Cardiac septum (tissue), 1 donor: ENCODE measurements at regions of chr12 and their contacts with region 1.

Region 1: DNA sequence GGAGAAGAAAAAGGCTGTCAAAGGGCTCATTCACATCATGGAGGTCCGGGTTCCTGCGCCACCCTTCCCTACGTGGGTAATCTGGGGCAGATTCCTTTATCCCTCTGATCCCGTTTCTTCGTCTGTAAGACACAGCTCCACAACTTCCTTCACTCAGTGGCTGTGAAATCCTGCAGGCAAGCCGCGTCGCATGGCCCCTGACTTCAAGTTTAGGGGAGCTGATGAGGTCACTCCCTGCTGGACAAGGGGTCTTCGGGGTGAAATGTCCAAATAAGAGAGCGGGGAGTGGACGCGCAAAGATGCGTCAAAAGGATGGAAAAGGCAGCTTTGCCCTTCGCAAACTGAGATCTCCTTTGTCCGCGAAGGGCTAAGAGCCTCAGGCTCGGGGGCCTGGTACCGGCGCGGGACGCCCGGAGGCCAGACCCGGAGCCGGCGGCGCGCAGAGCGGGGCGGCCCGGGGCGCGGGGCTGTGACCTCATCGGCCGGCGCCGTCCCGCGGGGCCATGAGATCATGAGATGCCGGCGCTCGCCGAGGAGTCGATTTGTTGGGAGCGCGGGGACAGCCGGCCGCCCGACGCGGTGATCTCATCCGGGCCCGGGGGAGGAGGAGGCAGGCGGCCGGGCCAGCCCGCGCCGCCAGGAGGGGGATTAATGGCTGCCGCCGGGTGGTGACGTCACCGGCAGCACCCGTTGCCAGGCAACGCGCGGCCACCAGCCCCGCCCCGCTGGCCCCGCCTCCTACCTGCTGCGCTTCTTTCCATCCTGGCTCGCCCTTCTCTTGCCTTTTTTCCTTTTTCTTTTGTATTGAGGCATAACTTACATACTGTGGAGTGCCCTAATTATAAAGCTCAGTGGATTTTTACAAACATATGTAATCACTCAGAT is 62.1 kb downstream of the HRK start:
- DNase-seq: peak; percentile 94

Region 2: GRCh38 chr12:116737774-116738700 is 81.2 kb before region 1 on chr12 and contains the starts of genes RNFT2 and SPRING1:
- intact Hi-C with region 1: loop called (anchors 2 kb)
- DNase-seq: peak; percentile 99
- total RNA-seq, gene RNFT2: 0.78 TPM
- total RNA-seq, gene SPRING1: 10.5 TPM